Endothelial cell of umbilical vein (primary cell): ENCODE measurements at regions of chr11 and their contacts with region 1.

Region 1: GRCh38 chr11:62108017-62108750 is 15.6 kb upstream of the INCENP start:
- DNase-seq: peak; percentile 68
- H3K4me3 ChIP-seq: no peak overlapping the region
- H3K27ac ChIP-seq: no peak overlapping the region
- H3K4me1 ChIP-seq: peaks cover 9% of the 10 kb centered on the region
- H3K27me3 ChIP-seq: no peaks in the 10 kb centered on the region
- CTCF ChIP-seq: peak; percentile 56 to 66
- POLR2A ChIP-seq: no peak

Region 2: DNA sequence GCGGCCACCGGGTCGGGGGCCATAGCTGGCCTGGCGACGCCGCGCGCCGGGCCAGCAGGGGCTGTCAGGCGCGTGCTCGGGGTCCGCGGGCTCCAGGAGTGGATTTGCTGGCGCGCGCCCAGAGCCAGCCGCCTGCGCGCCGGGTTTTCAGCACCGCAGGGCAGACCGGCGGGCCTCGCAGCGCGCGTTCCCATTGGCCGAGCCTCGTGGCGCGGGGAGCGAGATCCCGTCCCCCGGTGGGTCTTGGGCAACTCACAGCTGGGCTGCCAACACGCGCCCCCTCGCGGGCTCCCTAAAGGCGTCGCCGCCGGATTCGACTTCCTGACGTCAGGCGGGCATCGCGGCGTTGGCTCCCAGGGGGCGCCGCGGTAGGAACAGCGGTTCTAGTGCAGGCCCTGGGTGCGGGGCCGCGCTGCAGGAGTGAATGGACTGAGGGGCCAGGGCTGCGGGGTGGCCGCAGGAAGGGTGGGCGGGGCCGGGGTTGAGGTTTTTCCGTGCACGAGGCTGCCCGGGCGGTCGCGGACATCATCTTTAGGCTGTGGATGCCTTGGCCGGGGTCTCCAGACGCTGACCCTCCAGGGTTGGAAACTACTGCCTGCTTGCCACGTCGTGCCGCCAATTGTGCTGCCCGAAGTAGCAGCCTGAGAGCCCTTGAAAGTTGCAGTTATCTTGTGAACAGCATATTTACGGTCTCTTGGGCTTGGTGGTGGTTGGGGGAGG is 291.3 kb before region 1 on chr11 and contains the start of gene FADS1:
- CTCF ChIA-PET with region 1: interaction called, 13 read pairs
- POLR2A ChIA-PET with region 1: no interaction called
- dilution Hi-C with region 1: no loop called
- intact Hi-C with region 1: loop called (anchors 5 kb)
- DNase-seq: peak; percentile 97
- H3K4me3 ChIP-seq: peak within 1 kb of the TSS; percentile 56 to 86 (median 62)
- H3K27ac ChIP-seq: peak within 1 kb of the TSS; percentile 86
- H3K4me1 ChIP-seq: peaks cover 19% of the 10 kb centered on the region
- H3K27me3 ChIP-seq: no peaks in the 10 kb centered on the region
- CTCF ChIP-seq: peak; percentile 79 to 89
- POLR2A ChIP-seq: peak; percentile 50
- total RNA-seq, gene FADS1: 109 and 110 TPM in 2 replicates

Region 3: DNA sequence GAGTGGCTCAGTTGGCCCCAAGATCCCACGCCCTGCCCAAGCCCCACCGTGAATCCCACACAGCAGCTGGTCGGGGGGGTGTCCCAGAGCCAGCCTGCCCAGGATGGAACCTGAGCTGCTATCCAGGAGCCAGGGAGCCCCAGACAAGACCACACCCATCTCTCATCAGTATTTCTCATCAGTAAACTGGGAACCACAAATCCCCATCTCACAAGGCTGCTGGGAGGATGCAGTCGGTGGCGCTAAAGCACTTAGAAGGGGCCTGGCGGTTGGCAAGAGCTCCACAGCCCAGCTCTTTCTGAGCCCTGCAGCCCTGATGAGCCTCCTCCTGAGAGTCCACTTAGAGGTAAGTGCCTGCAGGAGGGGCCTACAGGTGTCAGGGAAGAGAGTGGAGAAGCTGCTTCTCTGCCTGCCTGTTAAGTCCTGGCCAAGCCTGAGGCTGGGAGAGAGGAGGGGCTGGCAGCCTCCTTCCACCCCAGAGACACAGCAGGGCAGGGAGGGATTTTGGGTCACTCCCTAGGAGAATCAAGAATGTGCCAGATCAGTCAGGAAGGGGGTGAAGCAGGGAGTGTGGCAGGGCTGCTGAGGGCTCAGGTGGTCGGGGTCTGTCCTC is 222.9 kb before region 1 on chr11:
- CTCF ChIA-PET with region 1: interaction called, 13 read pairs
- POLR2A ChIA-PET with region 1: interaction called, 13 read pairs
- dilution Hi-C with region 1: no loop called
- intact Hi-C with region 1: no loop called
- DNase-seq: no peak
- H3K4me3 ChIP-seq: no peak overlapping the region
- H3K27ac ChIP-seq: no peak overlapping the region
- H3K4me1 ChIP-seq: peaks cover 36% of the 10 kb centered on the region
- H3K27me3 ChIP-seq: no peaks in the 10 kb centered on the region
- CTCF ChIP-seq: no peak
- POLR2A ChIP-seq: no peak

Region 4: GRCh38 chr11:61899146-61899841 is 208.9 kb before region 1 on chr11:
- CTCF ChIA-PET with region 1: interaction called, 319 read pairs
- POLR2A ChIA-PET with region 1: no interaction called
- dilution Hi-C with region 1: no loop called
- intact Hi-C with region 1: loop called (anchors 1 kb)
- DNase-seq: peak; percentile 80
- H3K4me3 ChIP-seq: no peak overlapping the region
- H3K27ac ChIP-seq: no peak overlapping the region
- H3K4me1 ChIP-seq: no peaks in the 10 kb centered on the region
- H3K27me3 ChIP-seq: no peaks in the 10 kb centered on the region
- CTCF ChIP-seq: peak; percentile 100
- POLR2A ChIP-seq: no peak

Region 5: GRCh38 chr11:61923166-61924063 is 184.8 kb before region 1 on chr11:
- CTCF ChIA-PET with region 1: interaction called, 7 read pairs
- POLR2A ChIA-PET with region 1: no interaction called
- dilution Hi-C with region 1: loop called (anchors 10 kb)
- intact Hi-C with region 1: no loop called
- DNase-seq: no peak
- H3K4me3 ChIP-seq: no peak overlapping the region
- H3K27ac ChIP-seq: no peak overlapping the region
- H3K4me1 ChIP-seq: no peaks in the 10 kb centered on the region
- H3K27me3 ChIP-seq: peaks cover 5 to 28% of the 10 kb centered on the region in 2 experiments
- CTCF ChIP-seq: no peak
- POLR2A ChIP-seq: no peak

Region 6: DNA sequence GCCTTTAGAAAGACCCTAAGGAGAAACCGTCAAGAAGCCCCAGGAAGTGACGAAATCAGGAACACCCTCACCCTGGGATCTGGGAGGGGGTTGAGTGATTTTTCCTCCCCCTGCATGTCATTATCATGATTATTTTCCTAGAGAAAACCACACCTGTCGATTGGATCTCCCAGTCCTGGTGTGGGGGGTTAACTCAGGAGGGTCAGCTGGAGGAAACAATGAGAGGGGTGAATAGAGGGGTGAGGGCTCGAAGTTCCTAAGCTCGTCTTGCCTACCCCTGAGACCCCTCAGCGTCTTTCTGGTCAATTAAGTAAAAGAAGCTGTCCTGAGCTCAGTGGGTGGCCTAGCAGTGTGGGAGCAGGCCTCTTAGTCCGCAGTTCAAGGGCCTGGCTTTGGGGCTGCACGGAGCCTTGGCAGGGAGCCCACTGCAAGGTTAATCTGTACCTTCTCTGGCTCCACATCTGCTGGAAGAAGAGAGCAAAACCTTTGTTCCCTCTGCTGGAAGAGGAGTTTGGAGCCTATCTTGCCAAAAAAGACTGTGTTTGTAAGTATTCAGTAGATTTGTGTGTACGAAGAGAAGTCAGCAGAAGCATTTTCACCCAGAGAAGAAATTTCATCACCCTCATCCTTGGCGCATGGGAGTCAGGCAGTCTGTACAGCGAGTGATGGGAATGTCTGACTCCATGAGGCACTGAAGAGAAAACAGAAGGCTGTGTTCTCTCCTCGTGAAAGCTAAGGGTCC is 106.6 kb before region 1 on chr11:
- CTCF ChIA-PET with region 1: no interaction called
- POLR2A ChIA-PET with region 1: no interaction called
- dilution Hi-C with region 1: no loop called
- intact Hi-C with region 1: no loop called
- DNase-seq: no peak
- H3K4me3 ChIP-seq: no peak overlapping the region
- H3K27ac ChIP-seq: no peak overlapping the region
- H3K4me1 ChIP-seq: peaks cover 2% of the 10 kb centered on the region
- H3K27me3 ChIP-seq: no peaks in the 10 kb centered on the region
- CTCF ChIP-seq: no peak
- POLR2A ChIP-seq: no peak

Region 7: DNA sequence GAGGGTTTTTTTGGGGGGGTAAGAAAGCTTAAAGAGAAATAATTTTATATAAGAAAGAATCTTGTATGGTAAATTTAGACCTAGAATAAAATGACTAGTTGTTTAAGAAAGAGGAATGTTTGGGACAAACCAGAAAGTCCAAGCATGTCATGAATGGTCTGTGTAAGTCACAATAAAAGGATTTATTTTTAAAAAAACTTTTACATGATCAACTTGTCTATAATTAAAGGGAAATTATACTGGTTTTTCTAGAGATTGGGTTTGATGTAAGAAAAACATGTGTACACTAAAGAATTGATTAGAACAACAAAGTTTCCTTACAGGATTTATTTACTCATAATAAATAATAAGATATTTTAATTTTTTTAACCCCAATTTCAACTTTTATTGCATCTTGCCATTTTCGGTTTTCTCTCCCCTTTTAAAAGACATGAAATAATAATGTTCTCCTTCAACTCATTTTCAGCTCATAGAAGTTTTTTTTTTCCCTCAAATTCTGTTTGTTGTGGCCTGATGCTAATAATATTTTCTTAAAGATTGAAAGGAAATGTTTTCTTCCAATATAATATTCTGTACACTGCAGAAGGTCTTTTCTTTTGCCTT is 19.8 kb before region 1 on chr11:
- CTCF ChIA-PET with region 1: interaction called, 15 read pairs
- POLR2A ChIA-PET with region 1: no interaction called
- dilution Hi-C with region 1: no loop called
- intact Hi-C with region 1: no loop called
- DNase-seq: no peak
- H3K4me3 ChIP-seq: no peak overlapping the region
- H3K27ac ChIP-seq: no peak overlapping the region
- H3K4me1 ChIP-seq: no peaks in the 10 kb centered on the region
- H3K27me3 ChIP-seq: no peaks in the 10 kb centered on the region
- CTCF ChIP-seq: no peak
- POLR2A ChIP-seq: no peak

Region 8: GRCh38 chr11:62193952-62194351 is 85.8 kb after region 1 on chr11:
- CTCF ChIA-PET with region 1: no interaction called
- POLR2A ChIA-PET with region 1: no interaction called
- dilution Hi-C with region 1: no loop called
- intact Hi-C with region 1: no loop called
- DNase-seq: no peak
- H3K4me3 ChIP-seq: no peak overlapping the region
- H3K27ac ChIP-seq: no peak overlapping the region
- H3K4me1 ChIP-seq: no peaks in the 10 kb centered on the region
- H3K27me3 ChIP-seq: peaks cover 13 to 20% of the 10 kb centered on the region in 2 experiments
- CTCF ChIP-seq: no peak
- POLR2A ChIP-seq: no peak

Region 9: DNA sequence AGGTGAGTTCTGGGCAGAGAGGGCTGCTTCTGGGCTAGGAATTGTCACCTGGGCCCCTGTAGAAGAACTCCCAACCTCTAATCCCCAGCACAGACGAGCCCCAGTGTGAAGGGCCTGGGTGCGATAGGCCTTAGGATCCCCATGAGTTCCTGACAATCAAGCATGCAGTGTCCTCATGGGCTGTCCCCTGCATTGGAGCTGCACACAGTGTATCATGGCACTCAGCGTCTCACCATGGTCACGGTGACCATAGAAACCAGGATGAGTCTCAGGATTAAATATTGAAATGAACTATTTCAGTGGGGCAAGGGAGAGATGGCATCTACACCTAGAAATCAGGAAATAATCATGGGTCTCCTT is 100.6 kb after region 1 on chr11:
- CTCF ChIA-PET with region 1: interaction called, 13 read pairs
- POLR2A ChIA-PET with region 1: no interaction called
- dilution Hi-C with region 1: no loop called
- intact Hi-C with region 1: no loop called
- DNase-seq: no peak
- H3K4me3 ChIP-seq: no peak overlapping the region
- H3K27ac ChIP-seq: no peak overlapping the region
- H3K4me1 ChIP-seq: no peaks in the 10 kb centered on the region
- H3K27me3 ChIP-seq: peaks cover 0 to 4% of the 10 kb centered on the region in 2 experiments
- CTCF ChIP-seq: no peak
- POLR2A ChIP-seq: no peak